ENCODE measurements at regions of chr9 and their contacts with region 1.

Region 1: DNA sequence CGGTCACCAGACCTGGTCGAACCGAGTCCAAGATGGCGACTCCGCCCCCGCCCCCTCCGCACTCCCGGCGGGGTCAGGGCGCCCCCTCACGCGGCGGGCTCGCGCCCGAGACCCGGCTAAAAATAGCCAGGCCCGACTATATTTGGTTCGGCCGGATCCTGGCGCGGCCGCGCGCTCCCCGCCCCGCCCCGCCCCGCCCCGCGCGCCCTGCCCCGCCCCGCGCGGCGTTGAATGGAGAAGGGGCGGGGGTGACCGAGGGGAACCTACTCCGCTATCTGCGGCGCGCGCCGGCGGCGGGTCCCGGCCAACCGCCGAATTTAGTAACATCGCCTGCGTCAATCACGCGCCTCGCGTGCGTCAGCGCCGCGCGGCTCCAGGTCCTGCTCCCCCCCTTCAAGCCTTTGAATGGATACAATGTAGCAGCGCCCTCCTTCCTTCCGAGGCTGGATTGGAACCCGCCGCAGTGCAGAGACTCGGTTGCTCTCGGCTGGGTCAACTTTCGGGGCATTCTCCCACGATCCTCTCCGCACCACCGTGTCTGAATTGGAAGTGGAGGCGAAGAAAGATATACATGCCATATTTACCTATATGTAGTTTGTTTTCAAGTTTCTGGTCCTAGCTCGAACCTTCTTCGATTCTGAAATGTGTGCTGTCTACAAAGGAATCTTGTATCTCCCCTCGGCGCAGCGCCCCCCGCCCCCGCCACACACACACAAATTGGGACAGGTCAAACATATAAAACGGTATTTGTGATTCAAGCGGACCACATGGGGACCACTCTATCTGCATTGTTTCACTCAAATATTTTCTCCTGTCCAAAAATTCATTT is 1.6 kb upstream of the NR4A3 start:
- DNase-seq: peak; percentile 81 to 98 (median 87)

Region 2: DNA sequence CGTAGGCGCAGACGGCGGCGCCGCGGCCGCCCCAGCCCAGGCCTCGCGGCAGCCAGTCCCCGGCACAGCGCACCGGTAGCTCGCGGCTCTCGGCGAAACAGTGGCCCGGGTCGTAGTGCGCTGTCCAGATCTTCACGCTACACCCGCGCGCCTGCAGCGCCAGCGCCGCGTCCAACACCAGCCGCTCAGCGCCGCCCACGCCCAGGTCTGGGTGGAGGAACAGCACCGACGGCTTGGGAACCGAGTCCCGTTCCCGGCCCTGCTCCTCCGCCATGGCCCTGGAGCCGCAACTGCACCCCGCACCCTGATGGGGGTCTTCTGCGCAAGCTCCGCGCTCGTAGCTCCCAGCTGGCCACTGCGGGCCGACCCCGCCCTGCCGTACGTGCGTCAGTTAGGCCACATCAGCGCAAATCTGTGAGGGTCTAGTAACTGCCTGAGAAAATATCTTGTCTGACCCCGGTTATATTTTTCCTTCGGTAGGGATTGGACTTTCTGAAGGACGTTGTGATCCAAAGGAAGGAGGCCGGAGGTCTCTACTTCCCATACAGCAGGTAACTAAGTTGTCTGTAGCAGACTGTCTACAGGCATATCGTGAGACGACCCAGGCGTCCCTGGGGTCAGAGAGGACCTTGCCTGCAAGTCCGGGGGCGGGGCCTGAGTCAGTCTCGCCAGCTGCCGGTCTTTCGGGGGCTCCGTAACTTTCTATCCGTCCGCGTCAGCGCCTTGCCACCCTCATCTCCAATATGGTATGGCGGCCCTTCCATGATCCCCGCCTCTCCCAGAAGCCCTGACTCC is 598.3 kb before region 1 on chr9 and contains the starts of genes ALG2 and SEC61B:
- intact Hi-C with region 1: loop called (anchors 5 kb)
- DNase-seq: peak; percentile 91 to 99 (median 94)

Region 3: GRCh38 chr9:99259231-99259918 is 560.7 kb before region 1 on chr9:
- intact Hi-C with region 1: loop called (anchors 10 kb)
- DNase-seq: peak; percentile 69 to 97 (median 78)

Region 4: DNA sequence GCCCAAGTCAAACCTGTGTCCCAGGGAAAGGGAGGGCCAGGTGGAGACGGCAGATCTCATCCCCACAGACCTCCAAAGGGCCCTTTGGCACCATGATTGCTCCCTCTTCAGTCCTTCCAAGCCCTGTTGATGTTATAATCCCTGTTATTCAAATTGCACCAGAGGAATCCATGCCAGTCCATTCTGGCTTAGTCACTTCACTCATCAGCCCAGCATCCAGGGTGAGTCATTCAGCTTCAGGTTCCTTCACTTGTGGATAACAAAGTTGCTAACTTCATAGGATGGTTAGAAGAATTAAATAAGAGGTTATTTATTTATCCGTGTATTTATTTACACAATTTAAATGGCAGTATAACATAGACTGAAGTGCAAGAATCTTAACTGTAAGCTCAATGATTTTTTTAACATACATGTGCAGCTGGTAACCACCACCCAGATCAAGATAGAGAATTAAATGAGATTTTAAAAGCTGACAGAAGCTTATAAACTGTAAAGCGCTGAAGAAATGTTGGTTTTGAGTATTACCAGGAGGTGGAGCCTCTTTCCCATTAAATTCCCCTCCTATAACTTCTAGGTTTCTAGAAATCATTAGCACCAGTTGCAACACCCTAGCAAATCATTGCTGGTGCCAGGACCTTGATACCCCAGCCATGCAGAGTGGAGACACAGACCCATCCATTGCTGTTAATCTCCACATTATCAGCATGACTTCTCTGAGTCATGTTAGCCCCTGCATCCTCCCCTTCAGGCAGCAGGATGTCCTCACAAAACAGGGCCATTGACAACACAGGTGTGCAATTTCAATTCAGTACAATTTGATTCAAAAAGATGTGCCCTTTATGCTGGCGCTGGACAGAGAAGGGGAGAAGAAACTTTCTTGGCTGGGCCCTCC is 520.6 kb before region 1 on chr9:
- intact Hi-C with region 1: loop called (anchors 10 kb)
- DNase-seq: no peak

Region 5: GRCh38 chr9:99859243-99859980 is 39.3 kb after region 1 on chr9:
- intact Hi-C with region 1: no loop called
- DNase-seq: no peak

Region 6: GRCh38 chr9:99906403-99907207 is 86.5 kb after region 1 on chr9 and contains the start of gene STX17:
- intact Hi-C with region 1: loop called (anchors 5 kb)
- DNase-seq: peak; percentile 68 to 96 (median 80)

Region 7: GRCh38 chr9:100098887-100099721 is 279.0 kb after region 1 on chr9 and contains the starts of genes ERP44 and INVS:
- intact Hi-C with region 1: loop called (anchors 5 kb)
- DNase-seq: peak; percentile 99 to 100 (median 100)

Region 8: DNA sequence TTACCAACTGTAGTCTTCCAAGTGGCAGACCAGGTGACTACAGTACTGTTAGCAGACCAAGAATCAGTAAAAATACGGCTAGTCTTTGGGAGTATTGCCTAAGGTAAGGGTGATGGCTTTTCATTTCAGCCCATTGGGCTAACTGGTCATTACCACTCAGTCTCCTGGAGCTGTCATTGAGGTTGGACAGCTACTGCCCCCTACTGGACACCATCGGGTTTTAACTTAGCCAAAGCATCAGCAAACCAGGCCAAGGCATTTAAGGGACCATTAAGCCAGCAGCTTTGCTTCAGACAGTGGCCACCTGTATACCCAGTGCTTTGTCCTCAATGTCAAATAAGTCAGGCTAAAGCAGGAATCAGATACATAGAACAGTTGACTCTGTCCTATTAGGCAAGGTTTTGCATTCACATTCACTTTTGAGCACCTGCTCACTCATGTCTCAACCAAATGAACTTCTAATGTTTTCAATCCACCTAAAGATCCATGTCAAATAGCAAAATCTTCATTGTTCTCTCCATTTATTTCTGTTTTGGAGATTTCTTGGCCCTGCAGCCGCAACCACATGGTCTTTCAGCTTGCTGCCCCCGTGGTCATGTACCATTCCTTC is 396.2 kb after region 1 on chr9:
- intact Hi-C with region 1: loop called (anchors 10 kb)
- DNase-seq: peak in 5 of 10 donors; percentile 8 to 70 (median 57)

Measured in posterior cingulate gyrus (tissue), 11 donors.